ENCODE measurements at regions of chr14 and their contacts with region 1.

Region 1: GRCh38 chr14:49867831-49868723 is 15.5 kb upstream of the NEMF start:
- DNase-seq: peak; percentile 83 to 91
- H3K4me3 ChIP-seq: peak overlapping the region; percentile 61 to 70 (median 66)
- H3K27ac ChIP-seq: peak overlapping the region; percentile 37; the same call in 1 of the 2 replicates
- H3K4me1 ChIP-seq: peaks cover 0 to 3% (median 0%) of the 10 kb centered on the region in 4 experiments; a peak in 2 of 7 replicates
- H3K27me3 ChIP-seq: no peaks in the 10 kb centered on the region
- CTCF ChIP-seq: no peak
- EP300 ChIP-seq: no peak
- POLR2A ChIP-seq: peak; percentile 70 to 74
- RAD21 ChIP-seq: no peak

Region 2: DNA sequence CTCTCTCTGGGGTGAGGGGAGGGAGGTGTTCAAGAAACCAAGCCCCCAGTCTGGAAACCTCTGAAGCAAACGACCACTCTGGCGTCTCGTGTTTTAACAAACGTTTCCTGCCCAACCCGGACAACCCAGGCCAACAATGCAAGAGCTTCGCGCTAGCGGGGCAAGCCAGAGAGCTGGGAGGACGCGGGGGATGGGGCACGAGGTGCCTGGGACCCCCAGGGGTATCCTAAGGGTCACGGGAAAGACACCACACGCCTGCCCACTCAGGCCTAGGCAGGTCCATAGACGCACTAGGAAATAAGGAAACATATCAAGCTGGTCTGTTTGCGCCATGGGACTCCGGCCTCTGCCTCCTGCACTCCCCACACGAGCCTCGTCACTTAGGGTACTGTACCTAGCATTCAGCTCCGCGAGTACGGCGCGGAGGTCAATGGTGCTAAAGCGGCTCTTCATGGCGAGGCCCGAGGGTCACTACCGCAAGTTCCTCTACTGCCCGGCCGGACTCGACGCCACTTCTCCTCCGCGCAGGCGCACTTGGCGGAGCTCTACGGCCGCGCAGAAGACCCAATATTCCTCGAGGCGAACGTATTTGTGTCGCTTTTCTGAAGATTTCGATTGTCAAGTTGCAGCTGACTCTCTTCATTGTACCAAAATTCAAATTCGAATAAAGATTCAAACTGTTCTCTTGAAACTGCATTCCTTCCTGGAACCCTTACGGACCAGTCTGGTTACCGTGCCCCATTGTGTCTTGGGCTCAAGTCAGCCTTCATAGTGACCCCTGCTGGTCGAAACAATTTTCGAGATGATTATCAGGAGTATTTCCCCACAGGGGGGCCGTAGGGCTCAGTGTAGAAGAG is 15.5 kb before region 1 on chr14 and contains the start of gene NEMF:
- CTCF ChIA-PET with region 1: interaction called, 79 read pairs
- POLR2A ChIA-PET with region 1: interaction called, 39 read pairs
- DNase-seq: peak in 1 of 2 experiments; percentile 91
- H3K4me3 ChIP-seq: peak within 1 kb of the TSS; percentile 85 to 96 (median 95)
- H3K27ac ChIP-seq: peak within 1 kb of the TSS; percentile 78
- H3K4me1 ChIP-seq: no peaks in the 10 kb centered on the region
- H3K27me3 ChIP-seq: no peaks in the 10 kb centered on the region
- CTCF ChIP-seq: peak; percentile 53 to 70 (median 63)
- EP300 ChIP-seq: no peak
- POLR2A ChIP-seq: peak; percentile 71 to 97
- RAD21 ChIP-seq: peak in 1 of 2 experiments; percentile 22; a peak in 1 of 4 replicates
- total RNA-seq, gene NEMF: 44.5 and 45.5 TPM in 2 replicates

Region 3: DNA sequence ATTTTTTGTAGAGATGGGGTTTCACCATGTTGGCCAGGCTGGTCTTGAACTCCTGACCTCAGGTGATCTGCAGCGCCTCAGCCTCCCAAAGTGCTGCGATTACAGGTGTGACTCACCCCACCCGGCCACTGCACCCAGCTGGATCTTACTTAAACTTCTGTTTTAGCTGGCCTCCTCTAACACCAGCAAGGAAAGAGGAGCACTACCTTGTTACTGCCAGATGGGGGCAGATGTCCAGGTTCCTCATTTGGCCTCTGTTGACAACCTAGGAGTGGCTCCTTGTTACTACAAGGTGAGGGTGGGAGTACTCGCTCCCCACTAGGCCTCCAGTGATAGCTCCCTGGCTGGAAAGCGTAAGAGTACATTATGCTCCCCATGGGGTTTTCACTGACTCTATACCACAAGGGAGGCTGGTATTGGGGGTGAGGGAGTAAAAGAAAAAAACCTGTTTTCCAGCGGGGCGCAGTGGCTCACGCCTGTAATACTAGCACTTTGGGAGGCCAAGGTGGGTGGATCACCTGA is 11.7 kb after region 1 on chr14:
- CTCF ChIA-PET with region 1: interaction called, 41 read pairs
- POLR2A ChIA-PET with region 1: interaction called, 14 read pairs
- DNase-seq: peak; percentile 61 to 67
- H3K4me3 ChIP-seq: no peak overlapping the region
- H3K27ac ChIP-seq: no peak overlapping the region
- H3K4me1 ChIP-seq: peaks cover 2 to 8% (median 7%) of the 10 kb centered on the region in 4 experiments; a peak in 5 of 7 replicates
- H3K27me3 ChIP-seq: no peaks in the 10 kb centered on the region
- CTCF ChIP-seq: peak; percentile 63 to 93 (median 86)
- EP300 ChIP-seq: no peak
- POLR2A ChIP-seq: no peak
- RAD21 ChIP-seq: peak; percentile 63 to 80

Region 4: GRCh38 chr14:50070840-50071548 is 202.9 kb after region 1 on chr14:
- CTCF ChIA-PET with region 1: interaction called, 10 read pairs
- POLR2A ChIA-PET with region 1: no interaction called
- DNase-seq: no peak
- H3K4me3 ChIP-seq: no peak overlapping the region
- H3K27ac ChIP-seq: no peak overlapping the region
- H3K4me1 ChIP-seq: no peaks in the 10 kb centered on the region
- H3K27me3 ChIP-seq: no peaks in the 10 kb centered on the region
- CTCF ChIP-seq: no peak
- EP300 ChIP-seq: no peak
- POLR2A ChIP-seq: no peak
- RAD21 ChIP-seq: no peak

Region 5: GRCh38 chr14:50095895-50096294 is 227.8 kb after region 1 on chr14:
- CTCF ChIA-PET with region 1: interaction called, 10 read pairs
- POLR2A ChIA-PET with region 1: interaction called, 3 read pairs
- DNase-seq: no peak
- H3K4me3 ChIP-seq: no peak overlapping the region
- H3K27ac ChIP-seq: no peak overlapping the region
- H3K4me1 ChIP-seq: peaks cover 0 to 5% (median 3%) of the 10 kb centered on the region in 4 experiments; a peak in 3 of 7 replicates
- H3K27me3 ChIP-seq: no peaks in the 10 kb centered on the region; a peak in 1 of 7 replicates
- CTCF ChIP-seq: no peak
- EP300 ChIP-seq: no peak
- POLR2A ChIP-seq: no peak
- RAD21 ChIP-seq: no peak